ENCODE measurements at regions of chrX and their contacts with region 1.

Region 1: GRCh38 chrX:48801280-48802088 is at the start of gene HDAC6:
- DNase-seq: peak; percentile 99
- H3K4me3 ChIP-seq: peak within 1 kb of the TSS; percentile 58 to 77 (median 62)
- H3K27ac ChIP-seq: peak within 1 kb of the TSS; percentile 91 to 94 (median 94)
- H3K4me1 ChIP-seq: peaks cover 6 to 16% (median 10%) of the 10 kb centered on the region in 4 donors
- H3K27me3 ChIP-seq: no peaks in the 10 kb centered on the region
- CTCF ChIP-seq: no peak
- EP300 ChIP-seq: peak; percentile 26
- POLR2A ChIP-seq: no peak
- total RNA-seq, gene HDAC6: 26.8 to 64.0 (median 47.7) TPM

Region 2: DNA sequence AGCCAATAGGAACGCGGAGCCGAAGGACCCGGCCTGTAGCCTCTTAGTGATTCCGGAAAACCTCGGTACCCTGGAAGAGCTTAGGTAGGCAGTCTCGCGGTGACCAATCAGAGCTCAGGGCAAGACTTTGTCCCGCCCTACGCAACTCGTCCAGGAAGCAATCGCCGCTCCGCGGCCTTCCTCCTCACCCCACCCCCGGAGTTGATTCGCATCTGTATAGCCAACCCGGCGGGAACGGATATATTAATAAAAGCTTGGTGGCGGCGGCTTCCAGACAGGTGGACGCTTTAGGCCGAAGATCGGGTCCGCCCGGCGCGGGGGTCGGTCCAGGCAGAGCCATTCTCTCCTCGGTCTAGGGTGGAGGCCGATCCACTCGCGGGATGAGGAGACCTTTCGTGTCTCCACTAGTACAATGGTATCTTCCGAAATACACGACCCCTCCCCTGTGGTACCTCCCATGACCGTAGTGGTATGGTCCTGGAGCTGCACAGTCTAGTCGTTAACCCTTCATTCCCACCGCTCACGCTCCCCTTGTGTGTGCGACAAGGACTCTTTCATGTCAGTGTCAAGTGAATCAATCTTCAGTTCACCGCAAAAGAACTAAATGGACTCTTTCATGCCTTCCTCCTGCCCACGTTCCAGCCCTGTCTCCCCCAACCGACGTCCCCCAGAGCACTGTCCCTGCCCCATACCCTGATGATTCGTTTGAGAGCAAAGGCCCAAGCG is 64.1 kb before region 1 on chrX:
- intact Hi-C with region 1: loop called (anchors 2 kb)
- DNase-seq: peak; percentile 96
- H3K4me3 ChIP-seq: peak overlapping the region; percentile 57 to 77 (median 58)
- H3K27ac ChIP-seq: peak overlapping the region; percentile 77 to 90 (median 85)
- H3K4me1 ChIP-seq: peaks cover 0 to 7% (median 4%) of the 10 kb centered on the region in 4 donors
- H3K27me3 ChIP-seq: no peaks in the 10 kb centered on the region
- CTCF ChIP-seq: no peak
- EP300 ChIP-seq: no peak
- POLR2A ChIP-seq: peak; percentile 26

Region 3: DNA sequence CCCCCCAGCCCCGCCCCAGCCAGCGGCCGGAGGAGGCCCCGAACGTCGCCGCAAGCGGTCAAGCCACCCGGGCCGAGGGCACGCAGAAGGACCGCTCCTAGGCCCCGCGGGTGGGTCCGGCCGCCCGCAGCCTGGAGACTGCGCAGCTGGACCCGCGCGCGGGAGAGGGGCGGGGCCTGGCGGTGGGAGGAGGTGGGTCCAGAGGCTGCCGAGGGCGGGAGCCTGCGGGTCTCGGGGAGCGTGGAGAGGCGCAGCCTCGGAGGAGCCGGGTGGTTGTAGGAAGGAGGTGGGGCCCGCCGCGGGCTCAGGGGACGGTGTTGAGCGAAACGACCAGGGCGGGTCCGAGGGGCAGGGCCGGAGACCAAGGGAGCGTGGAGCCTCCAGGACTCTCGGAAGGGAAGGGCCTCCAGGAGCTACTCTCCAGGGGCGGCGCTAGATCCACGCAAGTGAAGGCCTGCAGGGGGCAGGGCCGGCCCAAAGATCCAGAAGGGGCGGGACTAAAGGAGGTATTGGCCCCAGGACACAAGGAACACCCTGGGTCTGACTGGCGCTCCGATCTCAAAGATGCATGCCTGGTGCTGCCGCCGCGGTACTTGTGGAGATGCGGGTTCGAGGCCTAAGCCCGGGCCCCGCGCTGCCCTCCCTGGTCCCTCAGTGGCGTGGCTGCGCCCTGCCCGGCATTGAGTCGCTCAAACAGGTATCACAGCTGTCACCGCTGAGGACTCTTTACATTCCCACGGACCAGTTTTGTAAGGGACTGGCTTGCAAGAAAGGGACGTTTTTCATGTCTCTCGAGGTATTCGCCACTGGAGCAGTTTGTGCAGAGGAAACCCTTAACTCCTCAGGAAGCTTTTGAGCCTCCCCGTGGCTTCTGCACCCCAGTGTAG is 90.2 kb after region 1 on chrX:
- intact Hi-C with region 1: loop called (anchors 5 kb)
- DNase-seq: peak; percentile 95
- H3K4me3 ChIP-seq: peak overlapping the region; percentile 68 to 70 (median 69)
- H3K27ac ChIP-seq: peak overlapping the region; percentile 80 to 84 (median 82)
- H3K4me1 ChIP-seq: peaks cover 4 to 22% (median 19%) of the 10 kb centered on the region in 4 donors
- H3K27me3 ChIP-seq: no peaks in the 10 kb centered on the region
- CTCF ChIP-seq: peak; percentile 40 to 53 (median 50)
- EP300 ChIP-seq: no peak
- POLR2A ChIP-seq: no peak